AG04449 (cell line): ENCODE measurements at regions of chr1 and their contacts with region 1.

Region 1: GRCh38 chr1:207050768-207051614 is at the start of gene YOD1:
- DNase-seq: no peak
- H3K4me3 ChIP-seq: peak within 1 kb of the TSS; percentile 84
- CTCF ChIP-seq: no peak

Region 2: DNA sequence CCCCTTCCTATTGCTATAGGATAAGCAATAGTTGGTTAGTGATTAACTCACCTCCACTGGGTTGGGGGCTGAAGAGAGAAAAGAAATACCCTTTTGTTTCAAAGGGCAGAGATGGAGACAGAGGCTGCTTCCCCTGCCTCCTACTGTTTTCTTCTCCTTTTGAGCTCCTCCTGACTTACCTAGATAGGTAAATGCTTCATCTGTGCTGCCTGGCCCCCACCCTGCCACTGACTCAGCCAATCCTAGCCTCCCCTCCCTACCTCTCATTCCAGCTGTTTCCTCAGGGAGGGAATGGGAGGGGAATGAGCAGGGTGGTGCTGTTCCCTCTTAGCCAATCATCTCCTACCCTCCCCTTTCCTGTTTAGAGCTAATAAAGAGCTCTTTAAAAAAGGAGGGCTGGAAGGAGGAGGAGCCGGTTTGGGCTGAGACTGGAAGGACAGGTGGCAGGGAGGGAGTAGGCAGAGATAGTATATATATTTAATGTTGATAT is 18.4 kb before region 1 on chr1 and contains the start of gene C1orf116:
- CTCF ChIA-PET with region 1: interaction called, 53 read pairs
- POLR2A ChIA-PET with region 1: no interaction called
- DNase-seq: no peak
- H3K4me3 ChIP-seq: no peak within 1 kb of the TSS
- CTCF ChIP-seq: no peak

Region 3: GRCh38 chr1:207064561-207064960 is 13.6 kb after region 1 on chr1:
- CTCF ChIA-PET with region 1: interaction called, 12 read pairs
- POLR2A ChIA-PET with region 1: no interaction called
- DNase-seq: no peak
- H3K4me3 ChIP-seq: no peak overlapping the region
- CTCF ChIP-seq: no peak

Region 4: GRCh38 chr1:207069858-207070506 is 19.0 kb after region 1 on chr1:
- CTCF ChIA-PET with region 1: interaction called, 10 read pairs
- POLR2A ChIA-PET with region 1: no interaction called
- DNase-seq: no peak
- H3K4me3 ChIP-seq: no peak overlapping the region
- CTCF ChIP-seq: no peak

Region 5: DNA sequence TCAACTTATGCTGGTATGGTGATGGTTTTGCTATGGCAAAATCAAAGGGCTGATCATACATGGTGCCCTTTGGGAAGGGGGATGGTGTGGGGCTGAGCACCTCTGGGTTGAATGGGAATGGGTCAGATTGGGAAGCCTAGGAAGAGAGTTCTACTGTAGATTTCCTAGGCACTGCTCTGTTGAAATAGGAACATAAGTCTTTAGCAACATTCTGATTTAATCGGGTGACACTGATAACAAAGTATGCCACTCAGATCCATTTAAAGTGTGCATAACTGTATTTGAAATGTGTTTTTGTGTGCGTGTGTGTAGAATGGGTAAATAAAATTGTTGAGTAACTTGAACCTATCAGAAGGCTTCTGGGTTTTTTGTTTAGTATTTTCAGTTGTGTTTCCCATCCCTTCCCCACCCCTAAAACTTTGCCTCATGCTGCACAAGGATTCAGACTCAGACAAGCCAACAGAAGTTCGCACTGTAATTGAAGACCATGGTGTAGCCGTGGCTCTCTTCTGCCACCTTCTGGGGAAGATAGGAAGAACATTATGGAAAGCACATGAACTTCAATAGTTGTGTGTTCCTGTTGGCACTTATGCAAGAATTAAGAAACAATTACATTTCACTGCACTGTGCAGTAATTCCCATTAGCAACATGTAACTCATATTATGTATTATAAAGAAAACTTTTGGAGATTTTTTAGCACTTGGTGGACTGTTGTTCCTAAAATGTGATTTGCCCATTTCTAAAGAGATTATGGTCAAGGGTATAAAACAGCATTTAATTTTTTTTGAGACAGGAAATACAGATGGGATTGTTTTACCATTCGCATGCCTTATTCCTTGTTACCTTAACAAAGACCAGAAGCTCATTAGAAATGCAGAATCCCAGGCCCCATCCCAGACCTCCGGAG is 26.7 kb after region 1 on chr1:
- CTCF ChIA-PET with region 1: interaction called, 14 read pairs
- POLR2A ChIA-PET with region 1: no interaction called
- DNase-seq: peak; percentile 23
- H3K4me3 ChIP-seq: no peak overlapping the region
- CTCF ChIP-seq: peak; percentile 86

Region 6: GRCh38 chr1:207084701-207085180 is 33.8 kb after region 1 on chr1:
- CTCF ChIA-PET with region 1: interaction called, 14 read pairs
- POLR2A ChIA-PET with region 1: no interaction called
- DNase-seq: no peak
- H3K4me3 ChIP-seq: no peak overlapping the region
- CTCF ChIP-seq: peak; percentile 44

Region 7: GRCh38 chr1:207404849-207405525 is 354.0 kb after region 1 on chr1:
- CTCF ChIA-PET with region 1: interaction called, 12 read pairs
- POLR2A ChIA-PET with region 1: no interaction called
- DNase-seq: peak; percentile 28
- H3K4me3 ChIP-seq: no peak overlapping the region
- CTCF ChIP-seq: peak; percentile 70